B cell (primary cell): ENCODE measurements at regions of chr20 and their contacts with region 1.

Region 1: DNA sequence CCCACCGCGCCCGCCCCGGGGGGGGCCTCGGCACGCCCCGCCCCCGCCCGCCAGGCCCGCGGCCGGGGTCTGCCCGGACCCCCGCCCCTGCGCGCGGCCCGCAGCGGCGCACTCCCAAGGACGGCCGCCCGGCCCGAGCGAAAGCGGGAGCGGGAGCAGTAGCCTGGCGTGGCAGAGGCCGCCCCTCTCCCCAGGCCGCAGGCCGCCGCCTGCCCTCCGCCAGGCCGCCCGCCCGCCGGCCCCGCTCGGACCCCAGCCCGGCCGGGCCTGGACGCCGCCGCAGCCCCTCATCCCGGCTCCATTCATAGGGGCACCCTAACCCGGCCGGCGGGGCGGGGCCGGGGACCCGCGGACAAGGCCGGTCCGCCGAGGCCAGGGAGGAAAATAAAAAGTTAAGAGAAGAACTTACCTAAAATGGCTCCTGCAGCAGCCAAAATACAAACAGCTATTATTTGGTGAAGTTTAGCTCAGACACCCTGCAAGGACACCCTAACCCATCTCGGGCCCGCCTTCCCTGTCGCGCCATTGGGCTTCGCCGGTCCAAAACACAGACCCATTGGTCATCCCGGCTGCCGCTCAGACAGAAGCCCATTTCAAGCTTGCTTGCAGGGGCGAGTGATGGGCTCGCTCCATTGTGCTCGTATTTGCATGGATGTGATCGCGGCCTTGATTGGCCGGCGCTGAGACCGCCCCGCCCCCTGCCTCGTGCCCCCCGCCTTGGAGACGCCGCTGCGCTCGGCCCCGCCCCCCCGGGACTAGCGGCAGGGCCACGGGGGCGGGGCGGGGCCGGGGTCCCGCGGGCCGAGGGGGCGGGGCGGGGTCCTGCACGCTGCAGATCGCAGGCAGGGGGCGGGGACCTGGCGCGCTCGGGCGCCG is at the start of gene CHD6:
- DNase-seq: peak; percentile 99
- ATAC-seq: peak; percentile 93
- H3K4me3 ChIP-seq: peak within 1 kb of the TSS; percentile 52 to 92 (median 72)
- H3K4me3 Mint-ChIP-seq: peak within 1 kb of the TSS; percentile 98
- H3K27ac ChIP-seq: peak within 1 kb of the TSS in 1 of 2 donors; percentile 57
- H3K27ac Mint-ChIP-seq: peak within 1 kb of the TSS; percentile 94
- H3K4me1 ChIP-seq: peaks cover 19 to 22% of the 10 kb centered on the region in 2 donors
- H3K4me1 Mint-ChIP-seq: peaks cover 42% of the 10 kb centered on the region
- H3K27me3 ChIP-seq: no peaks in the 10 kb centered on the region
- H3K27me3 Mint-ChIP-seq: no peaks in the 10 kb centered on the region
- CTCF ChIP-seq: no peak
- total RNA-seq, gene CHD6: 117 and 125 TPM in 2 replicates

Region 2: DNA sequence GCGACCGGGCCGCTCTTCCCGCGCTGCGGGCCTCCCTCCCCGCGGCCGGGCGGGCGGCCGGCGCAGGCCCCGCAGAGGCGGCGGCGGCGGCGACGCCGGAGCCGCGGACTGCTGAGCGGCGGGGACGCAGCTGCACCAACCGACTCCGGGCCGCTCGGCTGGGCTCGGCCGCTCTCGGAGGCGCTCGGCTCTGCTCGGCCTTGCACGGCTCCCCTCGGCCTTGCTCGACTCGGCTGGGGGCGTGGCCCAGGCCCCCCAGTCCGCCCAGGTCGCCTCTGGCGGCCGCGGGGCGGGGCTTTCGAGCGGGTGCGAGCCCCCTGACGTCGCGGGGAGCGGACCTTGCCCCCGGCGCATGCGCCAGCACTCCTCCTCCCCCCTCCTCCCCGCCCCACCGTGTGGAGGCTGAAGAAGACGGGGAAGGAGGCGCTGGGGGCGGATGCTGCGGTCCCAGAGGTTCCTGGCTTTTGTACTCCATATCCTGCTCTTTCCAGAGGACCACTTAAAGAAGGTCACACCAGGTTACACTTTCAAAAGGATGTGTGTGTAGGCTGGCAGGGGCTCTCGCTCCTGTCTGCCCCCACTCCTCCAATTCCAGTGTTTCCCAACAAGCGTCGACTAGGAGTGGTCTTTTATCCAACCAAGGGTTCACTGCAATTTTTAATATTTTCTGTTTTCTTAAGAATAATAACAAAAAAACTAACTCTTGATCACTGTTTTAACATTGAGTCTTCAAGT is 300.5 kb before region 1 on chr20 and contains the start of gene ZHX3:
- CTCF ChIA-PET with region 1: no interaction called
- POLR2A ChIA-PET with region 1: no interaction called
- intact Hi-C with region 1: loop called (anchors 5 kb)
- DNase-seq: peak; percentile 98
- ATAC-seq: peak; percentile 95
- H3K4me3 ChIP-seq: peak within 1 kb of the TSS in 4 of 5 experiments; percentile 65 to 86 (median 74)
- H3K4me3 Mint-ChIP-seq: peak within 1 kb of the TSS; percentile 91
- H3K27ac ChIP-seq: peak within 1 kb of the TSS; percentile 63 to 76
- H3K27ac Mint-ChIP-seq: peak within 1 kb of the TSS; percentile 91
- H3K4me1 ChIP-seq: peaks cover 11 to 12% of the 10 kb centered on the region in 2 donors
- H3K4me1 Mint-ChIP-seq: peaks cover 22% of the 10 kb centered on the region
- H3K27me3 ChIP-seq: no peaks in the 10 kb centered on the region
- H3K27me3 Mint-ChIP-seq: no peaks in the 10 kb centered on the region
- CTCF ChIP-seq: no peak
- total RNA-seq, gene ZHX3: 22.2 and 24.4 TPM in 2 replicates

Region 3: GRCh38 chr20:41453010-41453950 is 164.9 kb before region 1 on chr20:
- CTCF ChIA-PET with region 1: no interaction called
- POLR2A ChIA-PET with region 1: no interaction called
- intact Hi-C with region 1: no loop called
- DNase-seq: no peak
- ATAC-seq: no peak
- H3K4me3 ChIP-seq: no peak overlapping the region
- H3K4me3 Mint-ChIP-seq: no peak overlapping the region
- H3K27ac ChIP-seq: no peak overlapping the region
- H3K27ac Mint-ChIP-seq: no peak overlapping the region
- H3K4me1 ChIP-seq: no peaks in the 10 kb centered on the region
- H3K4me1 Mint-ChIP-seq: no peaks in the 10 kb centered on the region
- H3K27me3 ChIP-seq: no peaks in the 10 kb centered on the region
- H3K27me3 Mint-ChIP-seq: no peaks in the 10 kb centered on the region
- CTCF ChIP-seq: no peak

Region 4: GRCh38 chr20:41654292-41654691 is 36.1 kb after region 1 on chr20:
- CTCF ChIA-PET with region 1: no interaction called
- POLR2A ChIA-PET with region 1: no interaction called
- intact Hi-C with region 1: no loop called
- DNase-seq: no peak
- ATAC-seq: no peak
- H3K4me3 ChIP-seq: no peak overlapping the region
- H3K4me3 Mint-ChIP-seq: no peak overlapping the region
- H3K27ac ChIP-seq: no peak overlapping the region
- H3K27ac Mint-ChIP-seq: no peak overlapping the region
- H3K4me1 ChIP-seq: peaks cover 3 to 7% of the 10 kb centered on the region in 2 donors
- H3K4me1 Mint-ChIP-seq: peaks cover 8% of the 10 kb centered on the region
- H3K27me3 ChIP-seq: peaks cover 0 to 4% (median 0%) of the 10 kb centered on the region in 4 experiments
- H3K27me3 Mint-ChIP-seq: peaks cover 26% of the 10 kb centered on the region
- CTCF ChIP-seq: no peak

Region 5: GRCh38 chr20:41664350-41664983 is 46.3 kb after region 1 on chr20:
- CTCF ChIA-PET with region 1: no interaction called
- POLR2A ChIA-PET with region 1: no interaction called
- intact Hi-C with region 1: loop called (anchors 1 kb)
- DNase-seq: peak; percentile 66
- ATAC-seq: peak; percentile 88
- H3K4me3 ChIP-seq: peak overlapping the region in 2 of 5 experiments; percentile 29 to 47
- H3K4me3 Mint-ChIP-seq: peak overlapping the region; percentile 83
- H3K27ac ChIP-seq: no peak overlapping the region
- H3K27ac Mint-ChIP-seq: peak overlapping the region; percentile 88
- H3K4me1 ChIP-seq: no peaks in the 10 kb centered on the region
- H3K4me1 Mint-ChIP-seq: peaks cover 6% of the 10 kb centered on the region
- H3K27me3 ChIP-seq: peaks cover 0 to 12% (median 2%) of the 10 kb centered on the region in 4 experiments
- H3K27me3 Mint-ChIP-seq: peaks cover 31% of the 10 kb centered on the region
- CTCF ChIP-seq: no peak

Region 6: DNA sequence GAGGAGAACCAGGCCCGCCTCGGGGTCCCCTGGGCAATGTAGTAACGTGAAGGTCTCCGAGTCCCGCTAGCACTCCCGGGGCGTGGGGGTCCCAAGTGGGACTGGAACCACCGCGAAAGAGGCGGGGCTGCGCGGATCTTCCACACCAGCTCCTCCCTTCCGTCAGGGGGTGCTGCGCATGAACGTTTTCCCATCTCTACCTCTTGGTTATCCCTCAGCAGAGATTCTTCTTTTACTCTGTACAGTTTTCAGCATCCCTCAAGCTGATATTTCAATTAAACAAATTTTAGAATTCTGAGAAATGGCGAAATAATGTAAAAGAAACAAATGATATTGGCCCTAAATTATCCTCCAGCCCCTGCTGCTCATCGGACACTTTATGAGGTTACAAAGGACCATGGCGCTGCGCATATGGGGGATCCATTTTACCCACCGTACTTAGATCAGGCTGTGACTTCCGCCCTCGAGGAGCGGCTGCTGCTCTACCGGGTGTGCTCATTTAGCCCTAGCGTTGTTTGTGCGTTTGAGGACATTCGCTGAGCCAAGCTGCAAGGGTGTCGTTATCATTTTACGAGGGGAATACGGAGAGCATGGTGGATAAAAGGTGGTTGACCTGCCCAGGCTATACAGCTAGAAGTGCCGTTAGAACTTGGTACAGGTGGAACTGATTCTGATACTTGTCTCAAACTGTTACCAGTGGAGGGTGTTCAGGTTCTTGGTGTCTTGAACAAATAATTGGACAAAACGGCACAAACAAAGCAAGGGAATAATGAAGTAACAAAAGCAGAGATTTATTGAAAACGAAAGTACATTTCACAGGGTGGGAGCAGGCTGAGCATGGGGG is 75.2 kb after region 1 on chr20:
- CTCF ChIA-PET with region 1: interaction called, 8 read pairs
- POLR2A ChIA-PET with region 1: interaction called, 25 read pairs
- intact Hi-C with region 1: no loop called
- DNase-seq: peak; percentile 92
- ATAC-seq: peak; percentile 79
- H3K4me3 ChIP-seq: peak overlapping the region; percentile 84 to 96 (median 96)
- H3K4me3 Mint-ChIP-seq: peak overlapping the region; percentile 88
- H3K27ac ChIP-seq: peak overlapping the region; percentile 81 to 86
- H3K27ac Mint-ChIP-seq: peak overlapping the region; percentile 93
- H3K4me1 ChIP-seq: peaks cover 8 to 17% of the 10 kb centered on the region in 2 donors
- H3K4me1 Mint-ChIP-seq: peaks cover 13% of the 10 kb centered on the region
- H3K27me3 ChIP-seq: peaks cover 0 to 4% (median 2%) of the 10 kb centered on the region in 4 experiments
- H3K27me3 Mint-ChIP-seq: peaks cover 7% of the 10 kb centered on the region
- CTCF ChIP-seq: peak; percentile 67